A673 (cell line): ENCODE measurements at regions of chr3 and their contacts with region 1.

Region 1: DNA sequence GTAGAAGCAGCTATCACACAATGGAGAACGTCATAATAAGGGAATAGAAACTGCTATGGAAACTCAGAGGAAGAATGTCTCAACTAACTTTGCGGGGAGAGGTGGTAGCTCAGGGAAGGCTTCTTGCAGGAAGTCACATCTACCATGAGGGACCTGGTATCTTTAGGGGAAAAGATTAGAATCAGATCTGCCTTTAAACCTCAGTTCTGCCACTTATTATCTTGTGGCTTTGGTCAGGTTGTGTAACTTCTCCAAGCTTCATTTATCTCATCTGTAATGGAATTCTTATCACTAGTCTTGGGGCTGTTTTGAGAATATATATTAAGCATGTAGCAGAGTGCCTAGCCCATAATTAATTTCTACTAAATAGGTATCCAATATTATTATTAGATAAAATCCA is 46.4 kb upstream of the PRICKLE2 start:
- DNase-seq: no peak
- H3K4me3 ChIP-seq: no peak overlapping the region
- H3K27ac ChIP-seq: no peak overlapping the region
- H3K4me1 ChIP-seq: no peaks in the 10 kb centered on the region
- H3K27me3 ChIP-seq: peaks cover 12% of the 10 kb centered on the region
- CTCF ChIP-seq: no peak

Region 2: GRCh38 chr3:64259636-64260035 is 12.0 kb before region 1 on chr3:
- CTCF ChIA-PET with region 1: no interaction called
- POLR2A ChIA-PET with region 1: no interaction called
- intact Hi-C with region 1: loop called (anchors 1 kb)
- DNase-seq: no peak
- H3K4me3 ChIP-seq: no peak overlapping the region
- H3K27ac ChIP-seq: no peak overlapping the region
- H3K4me1 ChIP-seq: no peaks in the 10 kb centered on the region
- H3K27me3 ChIP-seq: no peaks in the 10 kb centered on the region
- CTCF ChIP-seq: no peak